T-cell (primary cell): ENCODE measurements at regions of chr4 and their contacts with region 1.

Region 1: GRCh38 chr4:56907489-56908205 is at the start of gene REST:
- DNase-seq: peak; percentile 61 to 93 (median 77)
- ATAC-seq: peak; percentile 64 to 76 (median 70)
- H3K4me3 ChIP-seq: peak within 1 kb of the TSS; percentile 74 to 84
- H3K4me3 Mint-ChIP-seq: peak within 1 kb of the TSS; percentile 84 to 97 (median 93)
- H3K27ac ChIP-seq: peak within 1 kb of the TSS; percentile 41
- H3K27ac Mint-ChIP-seq: peak within 1 kb of the TSS; percentile 89 to 95
- H3K4me1 ChIP-seq: peaks cover 28 to 33% of the 10 kb centered on the region in 2 experiments
- H3K4me1 Mint-ChIP-seq: peaks cover 42 to 49% (median 43%) of the 10 kb centered on the region in 3 donors
- H3K27me3 ChIP-seq: no peaks in the 10 kb centered on the region
- H3K27me3 Mint-ChIP-seq: no peaks in the 10 kb centered on the region
- total RNA-seq, gene REST: 57.0 to 72.1 (median 67.4) TPM

Region 2: DNA sequence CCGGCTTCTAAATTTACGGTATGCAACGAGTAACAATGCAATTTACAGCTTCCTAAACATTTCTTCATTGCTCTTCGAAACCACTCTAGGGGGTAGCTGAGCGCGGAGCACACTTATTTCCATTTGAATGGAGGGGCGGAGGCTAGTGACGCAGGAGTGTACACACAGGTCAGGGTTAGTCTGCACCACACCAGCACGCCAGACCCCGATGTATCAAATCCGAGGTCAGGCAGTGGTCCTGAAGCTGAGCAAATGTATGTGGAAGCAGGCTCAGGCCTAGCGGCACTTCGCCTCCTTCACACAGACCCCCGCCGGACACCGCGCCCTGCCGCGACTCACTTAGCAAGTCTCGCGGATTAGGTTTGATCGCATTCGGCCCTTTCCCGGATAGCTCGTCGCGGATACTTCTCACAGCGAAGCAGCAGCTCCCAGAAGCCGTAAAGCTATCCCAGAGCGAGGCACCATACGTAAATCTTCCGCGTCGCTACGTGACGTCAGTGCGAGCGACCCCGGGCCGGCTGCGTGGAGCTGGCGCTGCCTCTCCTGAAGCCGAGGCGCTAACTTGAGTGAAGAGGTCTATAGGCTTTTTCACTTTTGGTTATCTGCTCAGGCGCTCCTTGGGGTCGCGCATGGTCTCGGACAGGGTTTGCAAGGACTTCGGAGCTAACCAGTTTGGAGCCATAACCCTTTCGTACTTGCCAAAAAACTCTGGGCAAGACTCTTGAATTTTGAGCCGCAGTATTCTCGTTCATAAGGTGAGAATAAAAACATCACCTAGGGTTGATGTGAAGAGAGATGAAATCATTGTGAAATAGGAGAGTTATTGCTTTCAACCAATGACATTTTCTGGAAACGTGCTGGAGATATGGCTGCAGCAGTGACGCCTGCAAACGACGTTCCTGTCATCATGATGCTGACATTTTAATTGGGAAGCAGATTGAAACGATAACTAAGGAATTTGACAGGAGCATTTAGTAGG is 520.3 kb before region 1 on chr4 and contains the start of gene AASDH:
- CTCF ChIA-PET with region 1: interaction called, 10 to 14 read pairs
- POLR2A ChIA-PET with region 1: interaction called in 1 of 2 experiments, 4 read pairs
- DNase-seq: peak; percentile 90 to 98 (median 94)
- ATAC-seq: peak; percentile 88 to 92 (median 89)
- H3K4me3 ChIP-seq: peak within 1 kb of the TSS; percentile 76 to 95
- H3K4me3 Mint-ChIP-seq: peak within 1 kb of the TSS; percentile 88 to 98 (median 91)
- H3K27ac ChIP-seq: peak within 1 kb of the TSS; percentile 97
- H3K27ac Mint-ChIP-seq: peak within 1 kb of the TSS; percentile 95 to 99
- H3K4me1 ChIP-seq: peaks cover 11 to 15% of the 10 kb centered on the region in 2 experiments
- H3K4me1 Mint-ChIP-seq: peaks cover 40 to 56% (median 52%) of the 10 kb centered on the region in 3 donors
- H3K27me3 ChIP-seq: no peaks in the 10 kb centered on the region
- H3K27me3 Mint-ChIP-seq: no peaks in the 10 kb centered on the region
- total RNA-seq, gene AASDH: 13.3 to 17.7 (median 16.0) TPM

Region 3: DNA sequence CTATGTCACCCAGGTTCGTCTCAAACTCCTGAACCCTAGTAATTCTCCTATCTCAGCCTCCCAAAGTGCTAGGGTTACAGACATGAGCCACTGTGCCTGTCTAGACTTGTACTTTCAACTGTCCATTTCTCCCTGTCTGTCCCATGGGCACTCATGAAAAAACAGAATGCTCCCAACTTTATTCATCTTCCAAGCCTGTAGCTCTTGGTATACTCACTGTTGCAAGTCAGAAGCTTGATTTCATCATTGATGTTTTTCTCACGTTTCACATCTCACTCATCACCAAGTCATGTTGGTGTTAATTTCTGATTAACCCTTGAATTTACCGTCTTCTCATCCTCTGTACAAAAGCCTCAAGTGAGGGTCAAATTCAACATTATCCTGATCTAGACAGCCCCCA is 447.6 kb before region 1 on chr4:
- CTCF ChIA-PET with region 1: no interaction called
- POLR2A ChIA-PET with region 1: interaction called in 1 of 2 experiments, 10 read pairs
- DNase-seq: no peak
- ATAC-seq: no peak
- H3K4me3 ChIP-seq: no peak overlapping the region
- H3K4me3 Mint-ChIP-seq: no peak overlapping the region
- H3K27ac ChIP-seq: no peak overlapping the region
- H3K27ac Mint-ChIP-seq: no peak overlapping the region
- H3K4me1 ChIP-seq: peaks cover 0 to 3% of the 10 kb centered on the region in 2 experiments
- H3K4me1 Mint-ChIP-seq: peaks cover 20 to 28% (median 20%) of the 10 kb centered on the region in 3 donors
- H3K27me3 ChIP-seq: no peaks in the 10 kb centered on the region
- H3K27me3 Mint-ChIP-seq: no peaks in the 10 kb centered on the region

Region 4: GRCh38 chr4:56958111-56958517 is 50.5 kb after region 1 on chr4:
- CTCF ChIA-PET with region 1: no interaction called
- POLR2A ChIA-PET with region 1: interaction called in 1 of 2 experiments, 12 read pairs
- DNase-seq: peak in 1 of 35 experiments; percentile 4
- ATAC-seq: no peak
- H3K4me3 ChIP-seq: no peak overlapping the region
- H3K4me3 Mint-ChIP-seq: no peak overlapping the region
- H3K27ac ChIP-seq: no peak overlapping the region
- H3K27ac Mint-ChIP-seq: no peak overlapping the region
- H3K4me1 ChIP-seq: no peaks in the 10 kb centered on the region
- H3K4me1 Mint-ChIP-seq: no peaks in the 10 kb centered on the region
- H3K27me3 ChIP-seq: no peaks in the 10 kb centered on the region
- H3K27me3 Mint-ChIP-seq: no peaks in the 10 kb centered on the region

Region 5: GRCh38 chr4:56977321-56978012 is 69.8 kb after region 1 on chr4 and contains the start of gene NOA1:
- CTCF ChIA-PET with region 1: interaction called, 6 to 22 read pairs
- POLR2A ChIA-PET with region 1: interaction called, 7 to 26 read pairs
- DNase-seq: peak; percentile 93 to 100 (median 96)
- ATAC-seq: peak; percentile 76 to 81 (median 80)
- H3K4me3 ChIP-seq: peak within 1 kb of the TSS; percentile 98 to 99
- H3K4me3 Mint-ChIP-seq: peak within 1 kb of the TSS; percentile 100
- H3K27ac ChIP-seq: peak within 1 kb of the TSS; percentile 80
- H3K27ac Mint-ChIP-seq: peak within 1 kb of the TSS; percentile 98
- H3K4me1 ChIP-seq: peaks cover 22 to 52% of the 10 kb centered on the region in 2 experiments
- H3K4me1 Mint-ChIP-seq: peaks cover 65 to 74% (median 68%) of the 10 kb centered on the region in 3 donors
- H3K27me3 ChIP-seq: no peaks in the 10 kb centered on the region
- H3K27me3 Mint-ChIP-seq: no peaks in the 10 kb centered on the region
- total RNA-seq, gene NOA1: 15.2 to 27.2 (median 22.1) TPM